AG04449 (cell line): ENCODE measurements at regions of chr6 and their contacts with region 1.

Region 1: GRCh38 chr6:25263657-25264056 is 15.5 kb upstream of the CARMIL1 start:
- DNase-seq: peak; percentile 19
- H3K4me3 ChIP-seq: no peak overlapping the region
- CTCF ChIP-seq: no peak

Region 2: GRCh38 chr6:25223490-25223991 is 40.1 kb before region 1 on chr6:
- CTCF ChIA-PET with region 1: interaction called, 17 read pairs
- POLR2A ChIA-PET with region 1: no interaction called
- DNase-seq: no peak
- H3K4me3 ChIP-seq: peak overlapping the region; percentile 23
- CTCF ChIP-seq: peak; percentile 72

Region 3: DNA sequence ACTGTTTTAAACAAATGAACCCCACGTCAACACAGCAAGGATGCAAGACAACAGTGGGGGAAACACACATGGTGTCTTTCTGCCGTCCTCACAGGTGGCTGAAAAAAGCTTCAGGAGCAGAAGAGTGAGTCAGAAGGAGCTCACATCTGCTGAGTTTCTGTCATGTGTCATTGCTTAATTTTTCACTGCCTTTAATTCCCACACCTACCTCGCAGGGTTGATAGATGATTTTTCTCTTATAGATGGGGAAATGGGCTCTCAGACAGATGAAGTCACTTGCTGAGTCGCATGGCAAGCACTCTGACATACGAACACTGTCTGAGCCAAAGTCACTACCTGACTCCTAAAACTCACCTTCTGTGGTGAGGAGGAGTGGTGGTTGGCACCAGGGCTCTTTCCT is 12.8 kb before region 1 on chr6:
- CTCF ChIA-PET with region 1: interaction called, 72 read pairs
- POLR2A ChIA-PET with region 1: no interaction called
- DNase-seq: no peak
- H3K4me3 ChIP-seq: no peak overlapping the region
- CTCF ChIP-seq: no peak

Region 4: GRCh38 chr6:25336996-25337395 is 73.3 kb after region 1 on chr6:
- CTCF ChIA-PET with region 1: no interaction called
- POLR2A ChIA-PET with region 1: no interaction called
- DNase-seq: no peak
- H3K4me3 ChIP-seq: no peak overlapping the region
- CTCF ChIP-seq: no peak

Region 5: GRCh38 chr6:25418454-25419052 is 154.9 kb after region 1 on chr6:
- CTCF ChIA-PET with region 1: no interaction called
- POLR2A ChIA-PET with region 1: no interaction called
- DNase-seq: no peak
- H3K4me3 ChIP-seq: no peak overlapping the region
- CTCF ChIP-seq: no peak

Region 6: GRCh38 chr6:25476831-25477590 is 213.4 kb after region 1 on chr6:
- CTCF ChIA-PET with region 1: interaction called, 11 read pairs
- POLR2A ChIA-PET with region 1: no interaction called
- DNase-seq: no peak
- H3K4me3 ChIP-seq: no peak overlapping the region
- CTCF ChIP-seq: no peak

Region 7: GRCh38 chr6:25497383-25498040 is 233.9 kb after region 1 on chr6:
- CTCF ChIA-PET with region 1: interaction called, 16 read pairs
- POLR2A ChIA-PET with region 1: no interaction called
- DNase-seq: no peak
- H3K4me3 ChIP-seq: no peak overlapping the region
- CTCF ChIP-seq: no peak

Region 8: GRCh38 chr6:25556516-25556915 is 292.9 kb after region 1 on chr6:
- CTCF ChIA-PET with region 1: interaction called, 88 read pairs
- POLR2A ChIA-PET with region 1: no interaction called
- DNase-seq: peak; percentile 12
- H3K4me3 ChIP-seq: no peak overlapping the region
- CTCF ChIP-seq: peak; percentile 77